ENCODE measurements at regions of chr22 and their contacts with region 1.

Region 1: GRCh38 chr22:50620593-50621355 is 7.2 kb downstream of the ARSA start:
- DNase-seq: peak; percentile 77 to 95 (median 83)
- H3K4me3 ChIP-seq: peak overlapping the region; percentile 12 to 80
- H3K4me3 Mint-ChIP-seq: peak overlapping the region; percentile 91 to 96 (median 93)
- H3K27ac ChIP-seq: peak overlapping the region; percentile 85
- H3K27ac Mint-ChIP-seq: peak overlapping the region; percentile 94 to 99 (median 99)
- H3K4me1 ChIP-seq: peaks cover 34% of the 10 kb centered on the region
- H3K4me1 Mint-ChIP-seq: peaks cover 21 to 37% (median 29%) of the 10 kb centered on the region in 4 donors
- H3K27me3 ChIP-seq: no peaks in the 10 kb centered on the region
- H3K27me3 Mint-ChIP-seq: no peaks in the 10 kb centered on the region

Region 2: GRCh38 chr22:50185384-50186087 is 435.2 kb before region 1 on chr22 and contains the start of gene TRABD:
- CTCF ChIA-PET with region 1: no interaction called
- POLR2A ChIA-PET with region 1: interaction called, 16 read pairs
- intact Hi-C with region 1: loop called (anchors 2 kb)
- DNase-seq: peak; percentile 85 to 90 (median 87)
- H3K4me3 ChIP-seq: peak within 1 kb of the TSS; percentile 65 to 73
- H3K4me3 Mint-ChIP-seq: peak within 1 kb of the TSS; percentile 90 to 99 (median 96)
- H3K27ac ChIP-seq: peak within 1 kb of the TSS; percentile 68
- H3K27ac Mint-ChIP-seq: peak within 1 kb of the TSS; percentile 94 to 98 (median 97)
- H3K4me1 ChIP-seq: peaks cover 40% of the 10 kb centered on the region
- H3K4me1 Mint-ChIP-seq: peaks cover 9 to 41% (median 27%) of the 10 kb centered on the region in 4 donors
- H3K27me3 ChIP-seq: no peaks in the 10 kb centered on the region
- H3K27me3 Mint-ChIP-seq: peaks cover 0 to 2% of the 10 kb centered on the region in 2 donors
- total RNA-seq, gene TRABD: 124 to 126 TPM

Region 3: DNA sequence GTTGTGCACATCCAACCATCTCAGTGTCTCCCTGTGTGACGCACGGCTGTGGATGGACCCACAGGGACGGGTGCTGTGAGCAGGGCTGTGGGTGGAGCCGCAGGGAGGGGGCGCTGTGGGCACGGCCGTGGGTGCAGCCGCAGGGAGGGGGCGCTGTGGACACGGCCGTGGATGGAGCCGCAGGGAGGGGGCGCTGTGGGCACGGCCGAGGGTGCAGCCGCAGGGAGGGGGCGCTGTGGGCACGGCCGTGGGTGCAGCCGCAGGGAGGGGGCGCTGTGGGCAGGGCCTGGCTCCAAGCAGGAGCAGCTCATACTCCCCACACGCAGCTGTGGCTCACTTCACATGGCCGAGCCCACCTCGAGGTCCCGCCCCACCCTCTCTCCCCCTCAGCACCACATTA is 344.6 kb before region 1 on chr22:
- CTCF ChIA-PET with region 1: interaction called, 9 read pairs
- POLR2A ChIA-PET with region 1: interaction called, 3 read pairs
- intact Hi-C with region 1: loop called (anchors 2 kb)
- DNase-seq: peak in 3 of 5 donors; percentile 24 to 58 (median 52)
- H3K4me3 ChIP-seq: no peak overlapping the region
- H3K4me3 Mint-ChIP-seq: no peak overlapping the region
- H3K27ac ChIP-seq: no peak overlapping the region
- H3K27ac Mint-ChIP-seq: peak overlapping the region in 1 of 7 donors; percentile 66
- H3K4me1 ChIP-seq: peaks cover 6% of the 10 kb centered on the region
- H3K4me1 Mint-ChIP-seq: peaks cover 0 to 8% (median 3%) of the 10 kb centered on the region in 4 donors
- H3K27me3 ChIP-seq: no peaks in the 10 kb centered on the region
- H3K27me3 Mint-ChIP-seq: no peaks in the 10 kb centered on the region

Region 4: DNA sequence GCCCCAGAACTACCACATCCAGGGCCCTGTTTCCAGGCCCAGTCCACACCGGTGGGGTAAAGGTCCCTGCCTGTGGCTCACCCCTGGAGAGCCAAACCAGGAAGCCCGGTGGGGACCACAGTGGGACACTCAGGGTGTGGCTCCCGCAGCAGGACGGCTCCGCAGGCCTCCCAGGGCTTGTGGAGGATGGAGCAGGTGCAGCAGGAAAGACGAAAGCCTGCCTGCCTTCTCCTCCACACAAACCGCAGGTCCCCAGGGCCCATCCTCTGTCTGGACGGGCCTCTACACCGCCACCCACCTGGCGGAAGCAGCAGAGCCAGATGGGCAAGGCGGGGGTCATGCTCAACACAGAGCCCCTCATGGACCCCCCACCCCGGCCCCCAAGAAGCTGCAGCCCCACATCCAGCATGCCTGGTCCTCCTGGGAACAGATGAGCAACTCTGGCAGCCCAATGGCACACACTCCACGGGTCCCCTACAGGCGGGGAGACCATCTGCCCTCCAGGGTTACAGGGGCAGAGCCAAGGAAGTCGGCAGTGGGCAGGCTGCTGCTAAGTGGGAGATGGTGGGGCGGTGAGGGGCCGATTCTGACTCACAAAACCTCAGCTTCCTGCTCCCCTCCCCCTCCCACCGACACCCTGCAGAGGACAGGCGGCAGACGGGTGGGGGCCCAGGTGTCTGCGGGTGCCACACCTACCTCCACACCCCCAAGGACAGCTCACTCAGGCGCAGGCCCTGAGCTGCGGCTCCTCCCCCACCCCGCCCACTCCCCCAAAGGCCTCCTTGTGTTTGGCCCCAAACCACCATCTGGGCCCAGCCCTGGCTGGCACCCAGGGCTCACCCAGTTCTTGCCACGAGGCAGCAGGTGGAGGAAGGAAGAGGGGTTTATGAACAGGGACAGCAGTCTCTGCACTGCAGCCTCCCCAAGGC is 151.1 kb before region 1 on chr22:
- CTCF ChIA-PET with region 1: interaction called, 12 read pairs
- POLR2A ChIA-PET with region 1: interaction called, 32 read pairs
- intact Hi-C with region 1: no loop called
- DNase-seq: peak; percentile 96 to 99 (median 97)
- H3K4me3 ChIP-seq: peak overlapping the region; percentile 42 to 51
- H3K4me3 Mint-ChIP-seq: peak overlapping the region; percentile 74 to 88 (median 84)
- H3K27ac ChIP-seq: peak overlapping the region; percentile 75
- H3K27ac Mint-ChIP-seq: peak overlapping the region; percentile 89 to 98 (median 96)
- H3K4me1 ChIP-seq: peaks cover 58% of the 10 kb centered on the region
- H3K4me1 Mint-ChIP-seq: peaks cover 35 to 69% (median 51%) of the 10 kb centered on the region in 4 donors
- H3K27me3 ChIP-seq: no peaks in the 10 kb centered on the region
- H3K27me3 Mint-ChIP-seq: no peaks in the 10 kb centered on the region

Region 5: GRCh38 chr22:50507991-50508884 is 112.5 kb before region 1 on chr22 and contains the start of gene NCAPH2:
- CTCF ChIA-PET with region 1: interaction called, 6 read pairs
- POLR2A ChIA-PET with region 1: interaction called, 76 read pairs
- intact Hi-C with region 1: loop called (anchors 1 kb)
- DNase-seq: peak; percentile 96 to 97 (median 97)
- H3K4me3 ChIP-seq: peak within 1 kb of the TSS; percentile 84 to 98
- H3K4me3 Mint-ChIP-seq: peak within 1 kb of the TSS; percentile 92 to 98 (median 94)
- H3K27ac ChIP-seq: peak within 1 kb of the TSS; percentile 98
- H3K27ac Mint-ChIP-seq: peak within 1 kb of the TSS; percentile 90 to 99 (median 98)
- H3K4me1 ChIP-seq: peaks cover 28% of the 10 kb centered on the region
- H3K4me1 Mint-ChIP-seq: peaks cover 10 to 26% (median 19%) of the 10 kb centered on the region in 4 donors
- H3K27me3 ChIP-seq: no peaks in the 10 kb centered on the region
- H3K27me3 Mint-ChIP-seq: no peaks in the 10 kb centered on the region
- total RNA-seq, gene NCAPH2: 81.1 to 81.8 TPM

Region 6: GRCh38 chr22:50537765-50538164 is 83.0 kb before region 1 on chr22:
- CTCF ChIA-PET with region 1: interaction called, 28 read pairs
- POLR2A ChIA-PET with region 1: interaction called, 52 read pairs
- intact Hi-C with region 1: no loop called
- DNase-seq: no peak
- H3K4me3 ChIP-seq: no peak overlapping the region
- H3K4me3 Mint-ChIP-seq: peak overlapping the region in 6 of 8 donors; percentile 49 to 70 (median 60)
- H3K27ac ChIP-seq: peak overlapping the region; percentile 99
- H3K27ac Mint-ChIP-seq: peak overlapping the region; percentile 86 to 100 (median 96)
- H3K4me1 ChIP-seq: peaks cover 41% of the 10 kb centered on the region
- H3K4me1 Mint-ChIP-seq: peaks cover 25 to 61% (median 49%) of the 10 kb centered on the region in 4 donors
- H3K27me3 ChIP-seq: no peaks in the 10 kb centered on the region
- H3K27me3 Mint-ChIP-seq: no peaks in the 10 kb centered on the region

Region 7: GRCh38 chr22:50562523-50563412 is 58.0 kb before region 1 on chr22 and contains the start of gene SYCE3:
- CTCF ChIA-PET with region 1: interaction called, 30 read pairs
- POLR2A ChIA-PET with region 1: interaction called, 19 read pairs
- intact Hi-C with region 1: loop called (anchors 2 kb)
- DNase-seq: peak; percentile 94 to 97 (median 95)
- H3K4me3 ChIP-seq: peak within 1 kb of the TSS; percentile 62 to 78
- H3K4me3 Mint-ChIP-seq: peak within 1 kb of the TSS; percentile 92 to 97 (median 95)
- H3K27ac ChIP-seq: peak within 1 kb of the TSS; percentile 55
- H3K27ac Mint-ChIP-seq: peak within 1 kb of the TSS; percentile 78 to 96 (median 91)
- H3K4me1 ChIP-seq: peaks cover 8% of the 10 kb centered on the region
- H3K4me1 Mint-ChIP-seq: peaks cover 13 to 25% (median 20%) of the 10 kb centered on the region in 4 donors
- H3K27me3 ChIP-seq: no peaks in the 10 kb centered on the region
- H3K27me3 Mint-ChIP-seq: peaks cover 0 to 2% of the 10 kb centered on the region in 2 donors
- total RNA-seq, gene SYCE3: not detected

Region 8: DNA sequence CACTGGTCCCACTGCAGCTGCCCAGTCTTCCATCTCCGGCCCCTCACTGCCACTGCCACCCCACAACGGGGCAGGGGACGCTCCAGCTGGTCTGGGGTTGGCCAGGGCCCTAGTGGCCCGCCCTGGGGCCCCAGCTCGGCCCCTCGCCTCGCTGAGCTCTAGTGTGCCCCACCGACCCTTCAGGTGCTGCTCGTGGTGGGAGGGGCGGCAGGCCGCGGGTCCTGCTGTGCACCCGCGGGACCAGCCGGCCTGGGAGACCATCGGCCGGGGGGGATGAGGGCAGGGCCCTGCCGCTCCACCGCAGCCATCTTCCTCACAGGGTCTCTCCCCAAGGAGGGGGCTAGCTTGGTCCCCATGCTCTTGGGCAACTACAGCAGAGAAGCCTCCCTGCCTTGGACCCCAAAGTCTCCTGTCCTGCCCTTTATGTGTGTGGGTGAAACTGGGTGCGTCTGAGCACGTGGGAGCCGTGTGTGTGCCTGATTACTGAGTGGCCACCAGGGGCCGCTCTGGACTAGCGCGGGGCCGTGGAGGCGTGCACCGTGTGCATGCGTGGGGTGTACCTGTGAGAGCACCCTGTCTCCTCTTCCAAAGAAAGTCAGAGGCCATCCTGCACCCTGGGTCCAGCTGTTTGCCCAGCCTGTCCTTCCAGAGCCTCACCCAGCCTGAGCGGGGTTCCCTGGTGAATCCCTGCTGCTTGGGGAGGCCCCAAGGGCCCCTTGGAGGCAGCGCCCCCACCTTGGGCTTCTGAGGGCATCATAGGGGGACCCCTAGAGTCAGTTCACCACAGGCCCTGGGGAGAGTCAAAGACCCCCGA is 111.2 kb after region 1 on chr22:
- CTCF ChIA-PET with region 1: no interaction called
- POLR2A ChIA-PET with region 1: no interaction called
- intact Hi-C with region 1: no loop called
- DNase-seq: peak; percentile 50 to 69 (median 64)
- H3K4me3 ChIP-seq: no peak overlapping the region
- H3K4me3 Mint-ChIP-seq: no peak overlapping the region
- H3K27ac ChIP-seq: no peak overlapping the region
- H3K27ac Mint-ChIP-seq: peak overlapping the region in 1 of 7 donors; percentile 74
- H3K4me1 ChIP-seq: peaks cover 6% of the 10 kb centered on the region
- H3K4me1 Mint-ChIP-seq: peaks cover 4 to 5% (median 4%) of the 10 kb centered on the region in 4 donors
- H3K27me3 ChIP-seq: no peaks in the 10 kb centered on the region
- H3K27me3 Mint-ChIP-seq: peaks cover 0 to 2% of the 10 kb centered on the region in 2 donors